Ascending aorta (tissue), 2 donors: ENCODE measurements at regions of chr9 and their contacts with region 1.

Region 1: GRCh38 chr9:99012942-99013512 is 69.3 kb downstream of the COL15A1 start:
- DNase-seq: peak in 1 of 2 donors; percentile 60
- H3K4me3 ChIP-seq: no peak overlapping the region
- H3K27ac ChIP-seq: no peak overlapping the region
- H3K4me1 ChIP-seq: no peaks in the 10 kb centered on the region
- H3K27me3 ChIP-seq: no peaks in the 10 kb centered on the region
- CTCF ChIP-seq: peak; percentile 29 to 61 (median 40)

Region 2: DNA sequence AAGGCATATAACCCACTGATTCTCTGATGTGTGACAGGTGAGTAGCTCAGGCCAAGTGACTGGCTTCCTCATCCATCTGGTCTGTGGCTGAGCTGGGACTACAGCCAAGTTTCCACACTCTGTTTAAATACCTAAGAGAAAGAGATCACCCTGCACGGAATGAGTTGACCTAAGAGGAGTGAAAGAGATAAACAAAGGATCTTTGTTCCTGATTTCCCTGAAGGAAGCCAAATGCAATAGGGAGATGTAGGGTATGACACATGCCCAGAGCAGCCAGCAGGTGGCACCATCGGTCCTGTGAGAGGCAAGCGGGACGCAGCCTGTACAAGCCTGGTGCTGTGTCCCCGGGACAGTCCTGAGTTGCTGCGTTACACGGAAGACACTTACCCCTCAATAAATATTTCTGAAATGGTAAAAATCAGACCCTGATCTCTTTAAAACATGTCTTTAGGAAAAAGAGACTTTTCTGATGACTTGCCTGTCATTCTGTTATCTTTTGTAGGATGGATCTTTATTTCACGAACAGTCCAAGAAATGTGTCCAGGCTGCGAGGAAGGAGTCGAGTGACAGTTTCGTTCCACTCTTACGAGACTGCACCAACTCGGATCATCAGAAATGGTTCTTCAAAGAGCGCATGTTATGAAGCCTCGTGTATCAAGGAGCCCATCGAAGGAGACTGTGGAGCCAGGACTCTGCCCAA is 164.4 kb before region 1 on chr9:
- intact Hi-C with region 1: loop called (anchors 1 kb)
- DNase-seq: peak; percentile 26 to 92
- H3K4me3 ChIP-seq: peak overlapping the region; percentile 35 to 55
- H3K27ac ChIP-seq: no peak overlapping the region
- H3K4me1 ChIP-seq: no peaks in the 10 kb centered on the region
- H3K27me3 ChIP-seq: no peaks in the 10 kb centered on the region
- CTCF ChIP-seq: peak; percentile 78 to 90 (median 83)

Region 3: DNA sequence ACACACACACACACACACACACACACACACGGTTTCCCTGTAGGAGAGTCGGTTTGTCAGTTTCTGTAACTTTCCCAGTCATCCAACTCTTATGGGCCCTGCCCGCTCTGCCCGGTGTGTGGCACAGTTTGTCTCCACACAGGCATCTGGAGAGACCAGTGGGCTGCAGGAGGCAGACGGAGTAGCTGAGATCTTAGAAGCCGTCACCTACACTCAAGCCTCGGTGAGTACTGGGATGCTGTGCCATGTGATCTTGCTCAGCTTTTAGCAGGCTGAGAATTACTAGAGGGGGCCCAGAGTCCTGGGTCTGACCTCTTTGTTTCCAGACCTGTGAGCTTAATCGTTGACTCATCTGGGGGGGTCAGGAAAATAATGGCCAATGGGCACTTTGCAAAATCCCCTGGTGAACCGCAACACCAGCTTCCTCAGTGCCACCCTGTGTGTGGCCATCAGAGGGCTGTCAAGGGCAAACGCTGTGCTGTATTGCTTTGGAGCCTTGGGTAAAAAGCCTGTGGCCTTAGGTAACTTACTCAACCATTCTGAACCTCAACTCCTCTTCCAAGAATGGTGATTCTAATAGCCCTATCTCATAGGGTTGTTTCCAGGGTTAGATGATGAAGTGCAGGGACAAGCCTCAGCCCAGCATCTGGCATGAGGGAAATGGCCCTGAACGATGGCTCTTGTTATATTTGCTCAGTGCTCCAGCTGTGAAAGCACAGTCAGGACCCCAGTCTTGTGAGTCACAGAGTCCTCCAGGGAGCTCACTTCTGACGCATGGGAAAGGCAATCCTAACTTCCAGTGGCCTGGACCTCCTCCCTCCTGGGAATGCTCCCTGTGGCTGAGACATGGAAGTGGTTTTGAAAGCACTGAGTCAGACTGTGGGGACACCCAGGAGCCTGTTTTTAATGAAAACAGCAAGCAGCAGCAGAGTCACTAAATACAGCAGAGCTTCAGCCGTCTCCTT is 23.7 kb before region 1 on chr9:
- intact Hi-C with region 1: no loop called
- DNase-seq: peak; percentile 81 to 98
- H3K4me3 ChIP-seq: no peak overlapping the region
- H3K27ac ChIP-seq: peak overlapping the region; percentile 81 to 82
- H3K4me1 ChIP-seq: peaks cover 18 to 29% of the 10 kb centered on the region in 2 donors
- H3K27me3 ChIP-seq: no peaks in the 10 kb centered on the region
- CTCF ChIP-seq: peak; percentile 27 to 44 (median 36)

Region 4: GRCh38 chr9:99140685-99141314 is 127.8 kb after region 1 on chr9:
- intact Hi-C with region 1: no loop called
- DNase-seq: peak in 1 of 2 donors; percentile 60
- H3K4me3 ChIP-seq: no peak overlapping the region
- H3K27ac ChIP-seq: no peak overlapping the region
- H3K4me1 ChIP-seq: no peaks in the 10 kb centered on the region
- H3K27me3 ChIP-seq: no peaks in the 10 kb centered on the region
- CTCF ChIP-seq: peak; percentile 71 to 78 (median 72)

Region 5: GRCh38 chr9:99158629-99159028 is 145.6 kb after region 1 on chr9:
- intact Hi-C with region 1: no loop called
- DNase-seq: no peak
- H3K4me3 ChIP-seq: no peak overlapping the region
- H3K27ac ChIP-seq: no peak overlapping the region
- H3K4me1 ChIP-seq: peaks cover 4 to 5% of the 10 kb centered on the region in 2 donors
- H3K27me3 ChIP-seq: no peaks in the 10 kb centered on the region
- CTCF ChIP-seq: no peak